Activated naive CD4-positive, alpha-beta T cell treated with anti-CD3 and anti-CD28 coated beads for 36 hours (primary cell): ENCODE measurements at regions of chr9 and their contacts with region 1.

Region 1: DNA sequence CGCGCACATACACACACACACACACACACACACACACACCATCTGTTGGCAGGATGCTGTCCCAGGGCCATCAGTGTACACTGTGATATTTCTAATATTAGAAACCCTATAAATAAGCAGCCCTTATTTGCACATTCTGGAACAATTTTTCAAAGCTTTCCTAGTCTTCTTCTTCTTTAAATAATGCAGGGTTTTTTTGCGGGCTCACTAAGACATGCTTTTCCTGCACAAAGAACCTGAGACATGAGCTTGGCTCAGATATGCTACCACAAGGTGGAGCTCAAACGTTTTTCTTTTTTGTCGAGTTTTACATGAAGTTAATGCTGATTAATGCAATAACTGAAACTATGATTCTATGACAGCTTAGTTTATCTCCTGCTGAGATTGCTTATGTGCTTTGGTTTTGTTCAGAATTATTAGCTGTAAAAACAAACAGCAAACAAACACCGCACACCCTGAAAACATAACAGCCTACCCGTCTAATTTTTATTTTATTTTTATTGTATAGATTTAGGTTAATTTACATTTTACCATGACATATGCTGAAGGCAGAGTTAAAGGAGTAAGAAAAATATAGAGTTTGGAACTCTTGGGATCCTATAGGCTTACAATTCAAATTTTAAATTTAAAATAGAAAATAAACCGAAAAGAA is 95.8 kb downstream of the ALDH1A1 start:
- DNase-seq: peak; percentile 26
- H3K4me3 Mint-ChIP-seq: no peak overlapping the region
- H3K27ac Mint-ChIP-seq: no peak overlapping the region
- H3K4me1 Mint-ChIP-seq: no peaks in the 10 kb centered on the region
- H3K27me3 Mint-ChIP-seq: no peaks in the 10 kb centered on the region

Region 2: GRCh38 chr9:72925126-72925789 is 68.2 kb after region 1 on chr9:
- CTCF ChIA-PET with region 1: no interaction called
- intact Hi-C with region 1: no loop called
- DNase-seq: no peak
- H3K4me3 Mint-ChIP-seq: no peak overlapping the region
- H3K27ac Mint-ChIP-seq: no peak overlapping the region
- H3K4me1 Mint-ChIP-seq: no peaks in the 10 kb centered on the region
- H3K27me3 Mint-ChIP-seq: peaks cover 4% of the 10 kb centered on the region

Region 3: GRCh38 chr9:73023025-73023541 is 166.0 kb after region 1 on chr9:
- CTCF ChIA-PET with region 1: interaction called, 17 read pairs
- intact Hi-C with region 1: loop called (anchors 1 kb)
- DNase-seq: peak; percentile 68
- H3K4me3 Mint-ChIP-seq: no peak overlapping the region
- H3K27ac Mint-ChIP-seq: no peak overlapping the region
- H3K4me1 Mint-ChIP-seq: peaks cover 6% of the 10 kb centered on the region
- H3K27me3 Mint-ChIP-seq: peaks cover 15% of the 10 kb centered on the region

Region 4: DNA sequence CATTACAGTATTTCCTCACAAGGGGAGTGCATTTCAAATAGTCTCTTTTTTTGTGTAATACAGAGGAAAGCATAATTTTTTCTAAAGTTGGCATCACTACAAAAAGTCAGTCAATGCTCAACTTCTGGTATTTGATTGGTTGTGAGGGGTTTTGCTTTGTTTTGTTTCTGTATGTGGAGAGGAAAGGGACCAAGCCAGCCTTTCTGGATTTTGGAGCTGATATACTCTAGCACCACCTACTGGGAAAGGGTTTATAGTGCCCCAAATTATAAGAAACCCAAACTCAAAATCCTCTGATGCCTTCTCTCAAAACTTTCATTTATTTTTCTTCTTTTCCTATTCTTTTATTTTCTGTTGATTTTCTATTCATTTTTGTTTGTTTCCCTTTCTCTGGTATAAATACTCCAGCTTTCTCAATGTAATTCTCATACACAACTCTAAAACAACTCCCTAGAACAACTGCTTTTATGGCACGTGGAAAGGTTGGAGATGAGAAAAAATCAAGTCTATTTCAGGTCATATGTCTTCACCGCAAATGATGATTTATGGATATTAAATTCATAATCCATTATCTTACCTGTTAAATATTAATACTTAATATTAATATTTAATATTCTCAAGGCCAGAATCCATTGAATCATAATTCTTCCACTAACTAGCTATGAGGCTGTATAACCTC is 225.0 kb after region 1 on chr9:
- CTCF ChIA-PET with region 1: interaction called, 8 read pairs
- intact Hi-C with region 1: loop called (anchors 1 kb)
- DNase-seq: no peak
- H3K4me3 Mint-ChIP-seq: no peak overlapping the region
- H3K27ac Mint-ChIP-seq: no peak overlapping the region
- H3K4me1 Mint-ChIP-seq: no peaks in the 10 kb centered on the region
- H3K27me3 Mint-ChIP-seq: peaks cover 6% of the 10 kb centered on the region

Region 5: DNA sequence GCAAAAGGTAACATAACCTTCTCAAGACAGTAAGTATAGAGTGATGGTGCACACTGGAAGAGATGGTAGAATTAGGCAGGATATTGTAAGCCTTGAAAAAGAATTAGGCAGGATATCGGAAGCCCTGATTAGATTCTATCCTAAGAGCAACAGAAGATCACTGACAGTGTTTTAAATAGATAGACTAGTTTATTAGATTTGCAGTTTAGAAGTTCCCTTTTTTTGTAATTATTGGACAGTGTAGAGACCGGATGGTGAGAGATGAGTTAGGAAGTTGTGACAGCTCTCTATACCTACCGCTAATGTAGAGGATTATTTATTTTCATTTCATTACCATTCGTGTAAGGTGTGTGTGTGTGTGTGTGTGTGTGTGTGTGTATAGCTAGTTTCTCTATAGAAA is 311.4 kb after region 1 on chr9:
- CTCF ChIA-PET with region 1: no interaction called
- intact Hi-C with region 1: no loop called
- DNase-seq: no peak
- H3K4me3 Mint-ChIP-seq: no peak overlapping the region
- H3K27ac Mint-ChIP-seq: no peak overlapping the region
- H3K4me1 Mint-ChIP-seq: peaks cover 12% of the 10 kb centered on the region
- H3K27me3 Mint-ChIP-seq: no peaks in the 10 kb centered on the region